CD4-positive, alpha-beta T cell (primary cell): ENCODE measurements at regions of chr18 and their contacts with region 1.

Region 1: GRCh38 chr18:48675352-48675761 is 136.5 kb downstream of the CTIF start:
- DNase-seq: peak; percentile 61 to 90 (median 78)
- ATAC-seq: peak; percentile 96
- H3K4me3 ChIP-seq: no peak overlapping the region
- H3K4me3 Mint-ChIP-seq: no peak overlapping the region
- H3K27ac ChIP-seq: no peak overlapping the region
- H3K27ac Mint-ChIP-seq: no peak overlapping the region
- H3K4me1 ChIP-seq: peaks cover 9% of the 10 kb centered on the region
- H3K4me1 Mint-ChIP-seq: no peaks in the 10 kb centered on the region
- H3K27me3 ChIP-seq: no peaks in the 10 kb centered on the region
- H3K27me3 Mint-ChIP-seq: no peaks in the 10 kb centered on the region
- CTCF ChIP-seq: peak; percentile 79

Region 2: GRCh38 chr18:48896690-48897511 is 221.5 kb after region 1 on chr18:
- CTCF ChIA-PET with region 1: no interaction called
- POLR2A ChIA-PET with region 1: no interaction called
- intact Hi-C with region 1: no loop called
- DNase-seq: peak in 3 of 14 experiments; percentile 42 to 80 (median 70)
- ATAC-seq: peak; percentile 43
- H3K4me3 ChIP-seq: no peak overlapping the region
- H3K4me3 Mint-ChIP-seq: no peak overlapping the region
- H3K27ac ChIP-seq: no peak overlapping the region
- H3K27ac Mint-ChIP-seq: no peak overlapping the region
- H3K4me1 ChIP-seq: peaks cover 7% of the 10 kb centered on the region
- H3K4me1 Mint-ChIP-seq: peaks cover 13% of the 10 kb centered on the region
- H3K27me3 ChIP-seq: no peaks in the 10 kb centered on the region
- H3K27me3 Mint-ChIP-seq: no peaks in the 10 kb centered on the region
- CTCF ChIP-seq: no peak

Region 3: GRCh38 chr18:48913201-48913600 is 237.8 kb after region 1 on chr18:
- CTCF ChIA-PET with region 1: no interaction called
- POLR2A ChIA-PET with region 1: no interaction called
- intact Hi-C with region 1: loop called (anchors 2 to 5 kb)
- DNase-seq: peak; percentile 45 to 81 (median 54)
- ATAC-seq: peak; percentile 77
- H3K4me3 ChIP-seq: no peak overlapping the region
- H3K4me3 Mint-ChIP-seq: no peak overlapping the region
- H3K27ac ChIP-seq: no peak overlapping the region
- H3K27ac Mint-ChIP-seq: no peak overlapping the region
- H3K4me1 ChIP-seq: peaks cover 27% of the 10 kb centered on the region
- H3K4me1 Mint-ChIP-seq: peaks cover 49% of the 10 kb centered on the region
- H3K27me3 ChIP-seq: no peaks in the 10 kb centered on the region
- H3K27me3 Mint-ChIP-seq: no peaks in the 10 kb centered on the region
- CTCF ChIP-seq: peak; percentile 57

Region 4: DNA sequence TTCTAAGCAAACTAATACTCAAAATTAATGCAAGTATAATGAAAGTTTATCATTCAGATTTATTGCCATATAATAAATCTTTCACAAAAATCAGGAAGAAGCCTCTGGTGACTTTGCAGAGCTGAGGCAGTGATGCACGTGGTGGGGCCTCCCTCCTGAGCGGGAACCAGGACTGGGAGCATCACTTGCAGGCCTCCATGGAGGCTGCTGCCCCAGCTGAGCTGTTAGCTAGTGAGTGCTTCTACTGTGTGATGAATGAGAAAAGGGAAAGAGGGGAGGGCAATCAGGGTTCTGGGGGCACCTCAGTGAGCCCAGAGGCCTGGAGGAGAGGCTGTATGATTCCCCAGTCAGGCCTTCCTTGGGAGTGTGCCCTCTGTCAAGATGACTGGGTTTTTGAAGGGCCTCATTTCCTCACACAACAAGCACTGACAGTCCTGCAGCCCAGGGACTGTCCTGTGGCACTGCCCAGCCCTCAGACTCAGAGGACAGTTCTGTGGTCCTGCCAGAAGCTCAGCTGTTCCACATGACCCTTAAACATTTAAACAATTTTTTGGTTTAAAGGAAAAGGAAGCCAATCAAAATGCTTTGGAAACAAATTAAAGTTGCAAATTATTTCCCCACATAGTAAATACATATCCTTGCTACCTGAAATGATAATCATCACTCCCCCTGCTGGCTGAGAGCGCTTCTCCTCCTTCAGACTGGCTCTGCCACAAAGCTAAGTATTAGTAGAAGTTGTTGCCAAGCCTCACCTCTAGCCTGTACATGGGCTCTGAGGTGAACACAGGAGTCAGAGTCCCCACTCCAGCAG is 366.3 kb after region 1 on chr18:
- CTCF ChIA-PET with region 1: interaction called, 3 read pairs
- POLR2A ChIA-PET with region 1: no interaction called
- intact Hi-C with region 1: loop called (anchors 1 kb)
- DNase-seq: peak; percentile 27 to 73 (median 52)
- ATAC-seq: peak; percentile 68
- H3K4me3 ChIP-seq: no peak overlapping the region
- H3K4me3 Mint-ChIP-seq: no peak overlapping the region
- H3K27ac ChIP-seq: no peak overlapping the region
- H3K27ac Mint-ChIP-seq: no peak overlapping the region
- H3K4me1 ChIP-seq: no peaks in the 10 kb centered on the region
- H3K4me1 Mint-ChIP-seq: peaks cover 8% of the 10 kb centered on the region
- H3K27me3 ChIP-seq: no peaks in the 10 kb centered on the region
- H3K27me3 Mint-ChIP-seq: no peaks in the 10 kb centered on the region
- CTCF ChIP-seq: peak; percentile 60

Region 5: DNA sequence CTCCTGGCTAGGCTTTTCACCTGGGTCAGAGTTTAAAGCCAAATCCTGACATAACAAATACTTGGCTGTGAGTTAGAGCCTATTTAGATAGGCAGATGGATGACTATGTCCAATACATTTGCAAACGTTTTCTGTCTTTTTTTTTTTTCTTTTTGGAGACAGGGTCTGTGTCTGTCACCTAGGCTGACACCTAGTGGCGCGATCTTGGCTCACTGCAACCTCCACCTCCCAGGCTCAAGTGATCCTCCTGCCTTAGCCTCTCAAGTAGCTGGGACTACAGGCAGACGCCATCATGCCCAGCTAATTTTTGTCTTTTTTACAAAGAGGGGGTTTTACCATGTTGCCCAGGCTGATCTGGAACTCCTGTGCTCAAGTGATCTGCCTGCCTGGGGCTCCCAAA is 660.3 kb after region 1 on chr18:
- CTCF ChIA-PET with region 1: no interaction called
- POLR2A ChIA-PET with region 1: no interaction called
- intact Hi-C with region 1: loop called in 1 of 2 experiments (anchors 2 kb)
- DNase-seq: peak in 5 of 14 experiments; percentile 0 to 19 (median 11)
- ATAC-seq: no peak
- H3K4me3 ChIP-seq: no peak overlapping the region
- H3K4me3 Mint-ChIP-seq: no peak overlapping the region
- H3K27ac ChIP-seq: no peak overlapping the region
- H3K27ac Mint-ChIP-seq: no peak overlapping the region
- H3K4me1 ChIP-seq: no peaks in the 10 kb centered on the region
- H3K4me1 Mint-ChIP-seq: no peaks in the 10 kb centered on the region
- H3K27me3 ChIP-seq: no peaks in the 10 kb centered on the region
- H3K27me3 Mint-ChIP-seq: no peaks in the 10 kb centered on the region
- CTCF ChIP-seq: peak; percentile 17

Region 6: GRCh38 chr18:49510393-49511115 is 835.2 kb after region 1 on chr18:
- CTCF ChIA-PET with region 1: no interaction called
- POLR2A ChIA-PET with region 1: no interaction called
- intact Hi-C with region 1: loop called in 1 of 2 experiments (anchors 10 kb)
- DNase-seq: peak; percentile 21 to 79 (median 37)
- ATAC-seq: peak; percentile 68
- H3K4me3 ChIP-seq: no peak overlapping the region
- H3K4me3 Mint-ChIP-seq: no peak overlapping the region
- H3K27ac ChIP-seq: no peak overlapping the region
- H3K27ac Mint-ChIP-seq: no peak overlapping the region
- H3K4me1 ChIP-seq: peaks cover 3% of the 10 kb centered on the region
- H3K4me1 Mint-ChIP-seq: no peaks in the 10 kb centered on the region
- H3K27me3 ChIP-seq: no peaks in the 10 kb centered on the region
- H3K27me3 Mint-ChIP-seq: peaks cover 27% of the 10 kb centered on the region
- CTCF ChIP-seq: peak; percentile 82

Region 7: GRCh38 chr18:50266248-50266704 is 1590.9 kb after region 1 on chr18 and contains the start of gene CFAP53:
- CTCF ChIA-PET with region 1: no interaction called
- POLR2A ChIA-PET with region 1: no interaction called
- intact Hi-C with region 1: loop called in 1 of 2 experiments (anchors 5 kb)
- DNase-seq: peak in 13 of 14 experiments; percentile 54 to 92 (median 80)
- ATAC-seq: peak; percentile 77
- H3K4me3 ChIP-seq: peak within 1 kb of the TSS; percentile 66
- H3K4me3 Mint-ChIP-seq: peak within 1 kb of the TSS; percentile 93
- H3K27ac ChIP-seq: peak within 1 kb of the TSS; percentile 13 to 64
- H3K27ac Mint-ChIP-seq: peak within 1 kb of the TSS; percentile 45
- H3K4me1 ChIP-seq: peaks cover 25% of the 10 kb centered on the region
- H3K4me1 Mint-ChIP-seq: peaks cover 30% of the 10 kb centered on the region
- H3K27me3 ChIP-seq: no peaks in the 10 kb centered on the region
- H3K27me3 Mint-ChIP-seq: no peaks in the 10 kb centered on the region
- CTCF ChIP-seq: no peak
- total RNA-seq, gene CFAP53: 0.33 to 0.47 TPM